Heart right ventricle (tissue), 16 donors: ENCODE measurements at regions of chr11 and their contacts with region 1.

Region 1: GRCh38 chr11:22130462-22131053 is 62.3 kb upstream of the ANO5 start:
- DNase-seq: no peak
- ATAC-seq: peak in 4 of 8 donors; percentile 30 to 52 (median 40)
- H3K4me3 ChIP-seq: no peak overlapping the region
- H3K27ac ChIP-seq: no peak overlapping the region
- H3K4me1 ChIP-seq: no peaks in the 10 kb centered on the region
- H3K27me3 ChIP-seq: no peaks in the 10 kb centered on the region
- CTCF ChIP-seq: peak; percentile 24 to 64 (median 50)

Region 2: GRCh38 chr11:21814169-21814568 is 316.4 kb before region 1 on chr11:
- intact Hi-C with region 1: loop called in 1 of 10 experiments (anchors 10 kb)
- DNase-seq: no peak
- ATAC-seq: peak in 2 of 8 donors; percentile 22 to 40
- H3K4me3 ChIP-seq: no peak overlapping the region
- H3K27ac ChIP-seq: no peak overlapping the region
- H3K4me1 ChIP-seq: no peaks in the 10 kb centered on the region
- H3K27me3 ChIP-seq: no peaks in the 10 kb centered on the region
- CTCF ChIP-seq: no peak

Region 3: DNA sequence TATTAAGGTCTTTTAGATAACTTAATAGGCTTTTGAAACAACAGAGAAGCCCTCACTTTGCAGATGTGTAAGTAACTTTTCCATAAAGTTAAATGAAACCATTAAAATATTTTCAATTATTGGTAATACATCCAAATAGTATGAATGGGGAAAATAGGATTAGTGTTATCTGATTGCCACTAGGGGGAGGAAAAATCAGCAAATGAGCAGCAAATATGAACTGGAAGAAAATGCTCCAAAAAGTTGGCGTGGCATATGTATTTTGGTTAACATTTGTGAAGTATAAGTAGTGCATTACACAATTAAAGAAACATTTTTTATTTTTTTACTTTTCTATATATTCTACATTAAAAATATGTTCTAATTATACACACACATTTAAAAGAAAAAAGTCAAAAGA is 197.5 kb before region 1 on chr11:
- intact Hi-C with region 1: loop called in 1 of 10 experiments (anchors 5 kb)
- DNase-seq: no peak
- ATAC-seq: no peak
- H3K4me3 ChIP-seq: no peak overlapping the region
- H3K27ac ChIP-seq: no peak overlapping the region
- H3K4me1 ChIP-seq: no peaks in the 10 kb centered on the region
- H3K27me3 ChIP-seq: no peaks in the 10 kb centered on the region
- CTCF ChIP-seq: peak; percentile 21 to 57 (median 39)